SK-N-SH (cell line): ENCODE measurements at regions of chr15 and their contacts with region 1.

Region 1: DNA sequence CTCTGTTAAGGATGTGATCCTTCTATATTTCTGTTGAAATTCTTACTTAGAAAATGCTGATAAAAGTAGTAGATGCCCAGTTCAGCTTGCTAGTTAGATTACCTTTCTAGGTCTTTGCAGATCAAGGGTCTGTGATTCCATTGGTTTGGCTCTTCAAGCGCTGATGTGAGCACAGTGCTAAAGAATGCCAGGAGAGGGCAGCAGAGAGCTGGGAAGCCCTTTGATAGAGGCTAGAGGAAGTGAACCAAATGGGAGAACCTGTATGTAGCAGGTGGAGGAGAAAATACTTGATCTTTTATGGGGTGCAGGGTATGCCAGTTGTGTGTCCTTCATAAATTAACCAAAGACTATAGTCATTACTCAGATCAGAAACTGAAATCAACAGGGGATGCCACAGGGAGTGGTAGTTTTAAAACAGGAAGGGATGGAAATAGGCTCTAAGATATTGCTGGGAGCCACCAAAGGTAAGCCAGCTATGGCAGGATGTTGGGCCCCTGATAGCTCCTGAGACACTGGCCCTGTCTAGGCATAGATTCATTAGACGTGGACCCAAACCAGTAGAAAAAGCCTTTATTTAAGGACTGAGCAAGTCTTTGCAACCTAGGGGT is 677.4 kb downstream of the SQOR start:
- DNase-seq: peak; percentile 55
- H3K4me3 ChIP-seq: peak overlapping the region in 1 of 2 experiments; percentile 25; a peak in 1 of 4 replicates
- H3K27ac ChIP-seq: no peak overlapping the region
- H3K4me1 ChIP-seq: peaks cover 0 to 17% of the 10 kb centered on the region in 2 experiments; a peak in 1 of 4 replicates
- H3K27me3 ChIP-seq: no peaks in the 10 kb centered on the region
- CTCF ChIP-seq: peak; percentile 94
- EP300 ChIP-seq: no peak
- RAD21 ChIP-seq: peak; percentile 93

Region 2: GRCh38 chr15:46091860-46092450 is 220.3 kb before region 1 on chr15:
- CTCF ChIA-PET with region 1: interaction called, 14 read pairs
- POLR2A ChIA-PET with region 1: interaction called, 3 read pairs
- DNase-seq: peak; percentile 49
- H3K4me3 ChIP-seq: no peak overlapping the region; a peak in 1 of 4 replicates
- H3K27ac ChIP-seq: no peak overlapping the region
- H3K4me1 ChIP-seq: no peaks in the 10 kb centered on the region; a peak in 3 of 4 replicates
- H3K27me3 ChIP-seq: no peaks in the 10 kb centered on the region
- CTCF ChIP-seq: peak; percentile 44
- EP300 ChIP-seq: no peak
- RAD21 ChIP-seq: peak; percentile 83

Region 3: DNA sequence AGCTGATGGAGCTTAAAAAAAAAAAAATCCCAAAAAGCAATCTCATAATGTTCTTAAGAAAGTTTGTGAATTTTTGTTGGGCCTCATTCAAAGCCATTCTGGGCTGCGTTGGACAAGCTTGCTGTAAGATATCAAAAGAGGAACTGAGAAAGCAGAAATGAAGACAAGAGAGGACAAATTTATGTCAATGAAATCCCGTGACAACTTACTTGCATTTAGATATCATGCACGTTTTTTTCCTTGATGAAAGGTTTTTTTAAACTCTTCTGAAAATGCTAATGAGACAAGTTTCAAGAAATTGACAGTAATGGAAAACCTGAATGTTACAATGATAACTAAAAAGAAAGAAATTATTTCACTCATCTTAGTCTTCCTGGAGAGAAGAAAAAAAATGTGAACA is 14.5 kb before region 1 on chr15:
- CTCF ChIA-PET with region 1: interaction called, 13 read pairs
- POLR2A ChIA-PET with region 1: no interaction called
- DNase-seq: no peak
- H3K4me3 ChIP-seq: no peak overlapping the region
- H3K27ac ChIP-seq: no peak overlapping the region
- H3K4me1 ChIP-seq: no peaks in the 10 kb centered on the region
- H3K27me3 ChIP-seq: no peaks in the 10 kb centered on the region
- CTCF ChIP-seq: no peak
- EP300 ChIP-seq: no peak
- RAD21 ChIP-seq: no peak

Region 4: DNA sequence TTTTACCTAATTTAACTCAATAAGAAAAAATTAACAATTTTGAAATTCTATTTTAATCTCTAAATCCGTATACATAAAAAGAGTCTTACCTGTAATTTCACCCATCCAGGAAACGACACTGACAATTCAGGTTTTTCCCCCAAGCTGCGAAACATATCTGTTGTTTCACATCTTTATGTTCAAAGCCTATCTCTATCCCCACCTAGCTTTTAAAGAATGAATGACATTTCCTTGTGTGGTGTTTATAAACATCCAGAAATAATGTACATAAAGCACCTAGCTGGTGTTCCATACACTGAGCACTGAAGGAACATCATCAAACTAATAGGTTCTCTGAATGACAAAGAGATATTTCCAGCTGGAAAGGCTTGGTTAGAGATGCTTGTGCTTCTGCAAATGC is 190.4 kb after region 1 on chr15:
- CTCF ChIA-PET with region 1: interaction called, 19 read pairs
- POLR2A ChIA-PET with region 1: no interaction called
- DNase-seq: no peak
- H3K4me3 ChIP-seq: no peak overlapping the region
- H3K27ac ChIP-seq: no peak overlapping the region
- H3K4me1 ChIP-seq: no peaks in the 10 kb centered on the region
- H3K27me3 ChIP-seq: no peaks in the 10 kb centered on the region
- CTCF ChIP-seq: peak; percentile 55
- EP300 ChIP-seq: no peak
- RAD21 ChIP-seq: peak; percentile 55

Region 5: GRCh38 chr15:47027322-47027946 is 715.2 kb after region 1 on chr15:
- CTCF ChIA-PET with region 1: interaction called, 13 read pairs
- POLR2A ChIA-PET with region 1: no interaction called
- DNase-seq: peak; percentile 5
- H3K4me3 ChIP-seq: no peak overlapping the region
- H3K27ac ChIP-seq: no peak overlapping the region
- H3K4me1 ChIP-seq: no peaks in the 10 kb centered on the region; a peak in 1 of 4 replicates
- H3K27me3 ChIP-seq: no peaks in the 10 kb centered on the region
- CTCF ChIP-seq: no peak
- EP300 ChIP-seq: no peak
- RAD21 ChIP-seq: peak; percentile 71